CD8-positive, alpha-beta T cell (primary cell): ENCODE measurements at regions of chr5 and their contacts with region 1.

Region 1: DNA sequence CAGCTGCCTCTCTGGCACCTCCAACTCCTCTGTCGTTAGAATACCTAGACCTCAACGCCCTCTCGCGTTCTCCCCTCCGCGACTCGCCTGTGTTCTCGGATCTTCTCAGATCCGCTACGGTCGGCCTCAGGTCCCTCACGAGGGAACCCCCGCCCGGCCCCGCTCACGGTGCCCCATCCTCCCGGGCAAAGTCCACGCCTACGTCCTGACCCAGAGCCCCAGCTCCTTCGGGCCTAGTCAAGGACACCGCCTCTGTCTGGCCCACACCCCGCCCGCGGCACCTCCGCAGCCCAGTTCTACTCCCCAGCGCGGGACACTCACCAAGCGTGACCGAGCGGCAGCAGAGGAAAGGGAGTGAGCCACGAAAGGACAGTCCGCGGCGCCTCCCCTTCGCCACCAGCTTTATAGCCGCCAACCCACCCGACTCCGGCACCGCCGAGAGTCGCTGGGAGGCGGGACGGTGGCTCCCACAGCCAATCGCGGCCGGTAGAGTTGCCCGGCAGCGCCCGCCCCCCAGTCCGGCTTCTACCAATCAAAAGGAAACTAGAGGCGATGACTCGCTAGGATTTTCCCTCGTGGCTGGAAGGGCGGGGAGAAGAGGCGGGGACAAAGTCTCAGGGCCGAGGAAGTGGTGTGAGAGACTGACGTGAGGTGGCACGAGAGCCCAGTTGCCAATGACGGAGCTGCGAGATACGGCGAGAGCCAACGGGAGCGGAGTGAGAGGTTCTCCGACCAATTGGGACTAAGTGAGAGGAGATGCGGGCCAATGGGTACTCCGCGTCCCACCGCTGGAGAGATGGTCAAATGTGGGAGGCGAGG is at the start of gene HMGCS1:
- DNase-seq: peak; percentile 95 to 100 (median 98)
- ATAC-seq: peak; percentile 90
- H3K4me3 ChIP-seq: peak within 1 kb of the TSS; percentile 69 to 97
- H3K4me3 Mint-ChIP-seq: peak within 1 kb of the TSS; percentile 95
- H3K27ac ChIP-seq: peak within 1 kb of the TSS; percentile 84 to 98
- H3K27ac Mint-ChIP-seq: peak within 1 kb of the TSS; percentile 94
- H3K4me1 ChIP-seq: peaks cover 16% of the 10 kb centered on the region
- H3K4me1 Mint-ChIP-seq: peaks cover 40% of the 10 kb centered on the region
- H3K27me3 ChIP-seq: no peaks in the 10 kb centered on the region
- H3K27me3 Mint-ChIP-seq: no peaks in the 10 kb centered on the region
- CTCF ChIP-seq: peak; percentile 21
- total RNA-seq, gene HMGCS1: 74.1 to 74.7 TPM

Region 2: GRCh38 chr5:41903892-41904799 is 1409.1 kb before region 1 on chr5 and contains the start of gene RIMOC1:
- CTCF ChIA-PET with region 1: no interaction called
- POLR2A ChIA-PET with region 1: no interaction called
- intact Hi-C with region 1: loop called (anchors 1 to 10 kb)
- DNase-seq: peak; percentile 94 to 99 (median 97)
- ATAC-seq: peak; percentile 89
- H3K4me3 ChIP-seq: peak within 1 kb of the TSS; percentile 73 to 83
- H3K4me3 Mint-ChIP-seq: peak within 1 kb of the TSS; percentile 99
- H3K27ac ChIP-seq: peak within 1 kb of the TSS; percentile 84 to 91
- H3K27ac Mint-ChIP-seq: peak within 1 kb of the TSS; percentile 100
- H3K4me1 ChIP-seq: peaks cover 17% of the 10 kb centered on the region
- H3K4me1 Mint-ChIP-seq: peaks cover 44% of the 10 kb centered on the region
- H3K27me3 ChIP-seq: no peaks in the 10 kb centered on the region
- H3K27me3 Mint-ChIP-seq: no peaks in the 10 kb centered on the region
- CTCF ChIP-seq: no peak
- total RNA-seq, gene RIMOC1: 9.0 to 9.2 TPM

Region 3: GRCh38 chr5:42994246-42995151 is 318.7 kb before region 1 on chr5:
- CTCF ChIA-PET with region 1: no interaction called
- POLR2A ChIA-PET with region 1: interaction called, 11 read pairs
- intact Hi-C with region 1: loop called in 1 of 2 experiments (anchors 1 kb)
- DNase-seq: peak; percentile 75 to 94 (median 88)
- ATAC-seq: peak; percentile 63
- H3K4me3 ChIP-seq: peak overlapping the region; percentile 78 to 92
- H3K4me3 Mint-ChIP-seq: peak overlapping the region; percentile 99
- H3K27ac ChIP-seq: peak overlapping the region; percentile 97
- H3K27ac Mint-ChIP-seq: peak overlapping the region; percentile 100
- H3K4me1 ChIP-seq: peaks cover 23% of the 10 kb centered on the region
- H3K4me1 Mint-ChIP-seq: peaks cover 41% of the 10 kb centered on the region
- H3K27me3 ChIP-seq: no peaks in the 10 kb centered on the region
- H3K27me3 Mint-ChIP-seq: no peaks in the 10 kb centered on the region
- CTCF ChIP-seq: peak; percentile 93

Region 4: GRCh38 chr5:43066799-43067741 is 246.2 kb before region 1 on chr5:
- CTCF ChIA-PET with region 1: no interaction called
- POLR2A ChIA-PET with region 1: interaction called, 19 read pairs
- intact Hi-C with region 1: loop called in 1 of 2 experiments (anchors 2 kb)
- DNase-seq: peak; percentile 85 to 94 (median 90)
- ATAC-seq: peak; percentile 43
- H3K4me3 ChIP-seq: peak overlapping the region; percentile 87 to 99
- H3K4me3 Mint-ChIP-seq: peak overlapping the region; percentile 98
- H3K27ac ChIP-seq: peak overlapping the region; percentile 96 to 98
- H3K27ac Mint-ChIP-seq: peak overlapping the region; percentile 100
- H3K4me1 ChIP-seq: peaks cover 18% of the 10 kb centered on the region
- H3K4me1 Mint-ChIP-seq: peaks cover 48% of the 10 kb centered on the region
- H3K27me3 ChIP-seq: no peaks in the 10 kb centered on the region
- H3K27me3 Mint-ChIP-seq: no peaks in the 10 kb centered on the region
- CTCF ChIP-seq: no peak

Region 5: DNA sequence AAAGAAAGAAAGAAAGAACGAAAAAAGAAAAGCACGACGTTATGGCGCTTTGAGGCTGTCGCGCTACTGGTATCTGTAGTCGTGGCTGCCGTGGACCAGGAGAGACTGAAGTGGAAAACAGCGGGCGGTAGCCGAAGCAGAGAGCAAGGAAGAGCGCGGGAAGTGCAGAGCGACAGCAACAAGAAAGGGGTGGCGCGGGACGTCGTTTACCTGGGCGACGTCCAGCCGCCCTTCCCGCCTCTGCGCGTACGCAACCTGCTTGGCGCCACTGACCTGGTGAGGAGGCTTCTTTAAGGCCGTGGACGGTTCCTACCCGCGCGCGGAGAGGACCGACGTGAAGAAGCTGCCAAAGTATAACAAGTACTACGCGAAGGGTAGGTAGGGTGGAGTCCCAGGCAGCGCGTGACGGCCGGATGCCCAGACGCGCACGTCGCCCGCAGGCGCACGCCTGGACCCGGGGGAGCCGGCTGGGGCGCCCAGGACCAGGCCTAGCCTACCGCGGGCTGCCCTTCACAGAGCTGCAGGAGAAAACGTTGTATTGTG is 83.6 kb after region 1 on chr5:
- CTCF ChIA-PET with region 1: no interaction called
- POLR2A ChIA-PET with region 1: interaction called, 6 read pairs
- intact Hi-C with region 1: loop called in 1 of 2 experiments (anchors 2 kb)
- DNase-seq: peak; percentile 40 to 80 (median 60)
- ATAC-seq: peak; percentile 93
- H3K4me3 ChIP-seq: peak overlapping the region; percentile 66 to 86
- H3K4me3 Mint-ChIP-seq: peak overlapping the region; percentile 94
- H3K27ac ChIP-seq: peak overlapping the region; percentile 77 to 78
- H3K27ac Mint-ChIP-seq: peak overlapping the region; percentile 96
- H3K4me1 ChIP-seq: peaks cover 18% of the 10 kb centered on the region
- H3K4me1 Mint-ChIP-seq: peaks cover 39% of the 10 kb centered on the region
- H3K27me3 ChIP-seq: no peaks in the 10 kb centered on the region
- H3K27me3 Mint-ChIP-seq: no peaks in the 10 kb centered on the region
- CTCF ChIP-seq: no peak

Region 6: DNA sequence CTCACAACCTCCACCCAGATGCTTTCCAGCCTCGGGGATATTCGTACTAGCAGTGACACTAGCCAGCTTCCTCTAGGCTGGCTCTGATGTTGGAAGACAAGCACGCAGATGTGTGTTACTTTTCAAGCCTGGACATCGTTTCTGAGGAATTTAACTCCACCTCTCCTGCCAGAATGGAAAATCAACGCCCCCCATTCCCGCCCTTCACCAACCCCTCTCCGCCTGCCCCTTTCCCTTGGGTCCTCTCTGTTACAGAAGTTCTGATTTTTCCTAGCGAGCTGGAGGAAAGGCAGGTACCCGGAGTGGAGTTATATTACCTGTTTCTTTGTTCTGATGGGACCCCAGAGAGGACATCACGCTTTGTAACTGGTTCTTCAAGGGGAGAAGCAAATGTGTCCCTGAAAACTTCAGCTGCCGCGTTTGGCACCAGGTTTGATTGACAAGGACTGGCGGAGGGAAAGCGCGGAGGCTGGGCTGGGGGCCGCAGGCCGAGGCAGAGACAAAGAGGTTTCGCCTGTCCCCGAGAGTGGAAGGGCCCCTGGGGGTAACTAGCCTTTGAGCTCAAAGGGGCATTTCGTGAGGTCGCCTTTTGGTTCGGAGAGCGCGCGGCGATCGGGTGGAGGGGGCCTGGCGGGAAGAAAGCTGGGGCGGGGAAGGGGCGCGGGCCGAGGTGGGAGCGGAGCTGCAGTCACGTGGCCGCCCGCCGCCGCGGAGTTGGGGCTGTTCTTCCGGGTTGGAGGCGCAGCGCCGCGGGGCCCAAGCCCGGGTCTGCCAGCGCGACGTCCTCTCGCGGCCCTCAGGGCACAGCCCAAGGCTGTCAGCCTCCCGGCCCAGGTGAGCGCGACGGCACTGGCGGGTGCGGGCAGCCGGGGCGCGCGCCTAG is 289.5 kb after region 1 on chr5 and contains the start of gene NNT:
- CTCF ChIA-PET with region 1: no interaction called
- POLR2A ChIA-PET with region 1: no interaction called
- intact Hi-C with region 1: loop called (anchors 1 to 5 kb)
- DNase-seq: peak; percentile 46 to 87 (median 78)
- ATAC-seq: peak; percentile 71
- H3K4me3 ChIP-seq: peak within 1 kb of the TSS; percentile 95 to 98
- H3K4me3 Mint-ChIP-seq: peak within 1 kb of the TSS; percentile 89
- H3K27ac ChIP-seq: peak within 1 kb of the TSS; percentile 85 to 88
- H3K27ac Mint-ChIP-seq: peak within 1 kb of the TSS; percentile 92
- H3K4me1 ChIP-seq: peaks cover 14% of the 10 kb centered on the region
- H3K4me1 Mint-ChIP-seq: peaks cover 59% of the 10 kb centered on the region
- H3K27me3 ChIP-seq: no peaks in the 10 kb centered on the region
- H3K27me3 Mint-ChIP-seq: no peaks in the 10 kb centered on the region
- CTCF ChIP-seq: no peak
- total RNA-seq, gene NNT: 19.4 to 20.2 TPM

Region 7: DNA sequence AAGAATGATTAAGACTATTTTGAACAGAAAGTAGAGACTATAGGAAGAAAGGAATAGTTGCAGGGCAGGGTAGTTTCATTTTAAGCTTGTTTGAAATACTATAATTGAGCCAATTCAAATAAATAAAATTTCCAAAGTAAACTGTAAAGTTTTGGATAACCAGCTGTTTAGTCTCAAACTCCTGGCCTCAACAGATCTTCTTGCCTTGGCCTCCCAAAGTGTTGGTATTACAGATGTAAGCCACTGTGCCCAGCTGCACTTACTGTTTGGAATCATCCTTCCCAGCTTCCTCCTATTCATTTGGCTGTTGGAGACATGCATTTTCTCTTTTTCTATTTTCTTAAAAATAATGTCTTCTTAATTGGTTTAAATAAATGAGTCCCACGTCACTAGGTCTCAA is 520.7 kb after region 1 on chr5:
- CTCF ChIA-PET with region 1: no interaction called
- POLR2A ChIA-PET with region 1: no interaction called
- intact Hi-C with region 1: no loop called
- DNase-seq: no peak
- ATAC-seq: no peak
- H3K4me3 ChIP-seq: no peak overlapping the region
- H3K4me3 Mint-ChIP-seq: no peak overlapping the region
- H3K27ac ChIP-seq: no peak overlapping the region
- H3K27ac Mint-ChIP-seq: no peak overlapping the region
- H3K4me1 ChIP-seq: no peaks in the 10 kb centered on the region
- H3K4me1 Mint-ChIP-seq: no peaks in the 10 kb centered on the region
- H3K27me3 ChIP-seq: no peaks in the 10 kb centered on the region
- H3K27me3 Mint-ChIP-seq: no peaks in the 10 kb centered on the region
- CTCF ChIP-seq: no peak